Breast epithelium (tissue), 4 donors: ENCODE measurements at regions of chr14 and their contacts with region 1.

Region 1: GRCh38 chr14:89288114-89288513 is 128.9 kb downstream of the FOXN3 start:
- DNase-seq: no peak
- H3K4me3 ChIP-seq: no peak overlapping the region
- H3K27ac ChIP-seq: no peak overlapping the region
- H3K4me1 ChIP-seq: no peaks in the 10 kb centered on the region
- H3K27me3 ChIP-seq: no peaks in the 10 kb centered on the region
- CTCF ChIP-seq: no peak
- POLR2A ChIP-seq: no peak

Region 2: DNA sequence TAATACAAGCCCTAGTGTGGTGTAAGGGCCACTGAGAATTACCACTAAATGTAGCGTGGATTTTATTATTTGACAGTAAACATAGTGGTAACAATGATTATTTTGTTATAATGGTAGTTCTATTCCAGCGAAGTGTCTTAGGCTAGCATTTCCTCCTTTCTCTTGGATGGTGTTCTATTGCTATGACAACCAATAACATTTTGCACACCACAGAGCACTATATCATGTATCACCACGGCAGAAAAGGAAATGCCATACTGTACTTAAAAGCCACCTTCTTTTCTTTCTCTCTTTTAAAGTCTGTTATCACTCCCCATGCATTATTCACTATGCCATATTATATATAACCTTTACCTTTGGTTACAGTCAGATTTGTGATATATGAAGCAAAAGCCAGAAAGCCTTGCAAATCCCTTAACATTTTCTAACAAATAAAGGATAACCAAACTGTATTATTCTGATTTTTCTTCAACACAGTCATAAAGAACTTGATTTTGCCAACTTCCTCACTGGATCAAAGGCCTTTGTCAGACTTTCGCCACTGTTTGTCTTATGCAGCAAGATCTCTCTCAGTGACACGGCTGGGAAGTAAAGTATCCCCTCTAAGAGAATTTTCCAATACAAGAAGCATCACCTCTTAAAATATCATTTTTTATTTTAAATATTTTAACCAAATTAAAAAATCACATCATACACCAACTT is 66.9 kb before region 1 on chr14:
- intact Hi-C with region 1: loop called (anchors 2 kb)
- DNase-seq: no peak
- H3K4me3 ChIP-seq: no peak overlapping the region
- H3K27ac ChIP-seq: peak overlapping the region in 1 of 2 donors; percentile 17
- H3K4me1 ChIP-seq: no peaks in the 10 kb centered on the region
- H3K27me3 ChIP-seq: no peaks in the 10 kb centered on the region
- CTCF ChIP-seq: no peak
- POLR2A ChIP-seq: no peak

Region 3: GRCh38 chr14:89336338-89336737 is 48.2 kb after region 1 on chr14:
- intact Hi-C with region 1: no loop called
- DNase-seq: no peak
- H3K4me3 ChIP-seq: no peak overlapping the region
- H3K27ac ChIP-seq: peak overlapping the region; percentile 36 to 57
- H3K4me1 ChIP-seq: peaks cover 0 to 4% of the 10 kb centered on the region in 2 donors
- H3K27me3 ChIP-seq: no peaks in the 10 kb centered on the region
- CTCF ChIP-seq: no peak
- POLR2A ChIP-seq: no peak

Region 4: GRCh38 chr14:89787525-89787924 is 499.4 kb after region 1 on chr14:
- intact Hi-C with region 1: no loop called
- DNase-seq: no peak
- H3K4me3 ChIP-seq: no peak overlapping the region
- H3K27ac ChIP-seq: no peak overlapping the region
- H3K4me1 ChIP-seq: no peaks in the 10 kb centered on the region
- H3K27me3 ChIP-seq: no peaks in the 10 kb centered on the region
- CTCF ChIP-seq: no peak
- POLR2A ChIP-seq: no peak